Calu3 (cell line): ENCODE measurements at regions of chr9 and their contacts with region 1.

Region 1: GRCh38 chr9:1018121-1018701 is 31.9 kb upstream of the DMRT2 start:
- DNase-seq: no peak
- H3K4me3 Mint-ChIP-seq: no peak overlapping the region
- H3K27ac Mint-ChIP-seq: no peak overlapping the region
- H3K4me1 Mint-ChIP-seq: no peaks in the 10 kb centered on the region
- H3K27me3 Mint-ChIP-seq: peaks cover 14% of the 10 kb centered on the region
- CTCF ChIP-seq: no peak

Region 2: GRCh38 chr9:942805-943580 is 75.2 kb before region 1 on chr9:
- CTCF ChIA-PET with region 1: no interaction called
- intact Hi-C with region 1: no loop called
- DNase-seq: no peak
- H3K4me3 Mint-ChIP-seq: no peak overlapping the region
- H3K27ac Mint-ChIP-seq: no peak overlapping the region
- H3K4me1 Mint-ChIP-seq: no peaks in the 10 kb centered on the region
- H3K27me3 Mint-ChIP-seq: peaks cover 16% of the 10 kb centered on the region
- CTCF ChIP-seq: no peak

Region 3: DNA sequence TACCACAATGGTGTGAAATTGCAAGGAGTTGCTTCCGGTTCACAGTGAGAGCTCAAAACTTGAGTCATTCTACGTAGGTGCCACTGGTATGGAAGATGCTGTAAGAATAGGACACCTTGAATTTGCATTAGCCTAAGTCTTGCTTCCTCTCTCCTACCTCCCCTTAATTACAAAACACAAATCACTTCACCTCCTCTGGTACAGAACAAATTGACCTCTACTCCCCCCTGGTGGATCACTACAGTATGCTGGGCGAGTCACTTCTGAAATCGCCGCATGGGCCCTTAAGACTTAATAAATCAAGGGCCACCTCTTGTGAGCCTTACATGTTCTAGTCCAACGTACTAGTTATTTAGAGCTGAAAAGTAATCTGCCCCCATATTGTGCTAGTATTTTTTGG is 851.6 kb after region 1 on chr9:
- CTCF ChIA-PET with region 1: no interaction called
- intact Hi-C with region 1: loop called (anchors 5 kb)
- DNase-seq: peak; percentile 45
- H3K4me3 Mint-ChIP-seq: no peak overlapping the region
- H3K27ac Mint-ChIP-seq: no peak overlapping the region
- H3K4me1 Mint-ChIP-seq: no peaks in the 10 kb centered on the region
- H3K27me3 Mint-ChIP-seq: no peaks in the 10 kb centered on the region
- CTCF ChIP-seq: peak; percentile 21